ENCODE measurements at regions of chr6 and their contacts with region 1.

Region 1: DNA sequence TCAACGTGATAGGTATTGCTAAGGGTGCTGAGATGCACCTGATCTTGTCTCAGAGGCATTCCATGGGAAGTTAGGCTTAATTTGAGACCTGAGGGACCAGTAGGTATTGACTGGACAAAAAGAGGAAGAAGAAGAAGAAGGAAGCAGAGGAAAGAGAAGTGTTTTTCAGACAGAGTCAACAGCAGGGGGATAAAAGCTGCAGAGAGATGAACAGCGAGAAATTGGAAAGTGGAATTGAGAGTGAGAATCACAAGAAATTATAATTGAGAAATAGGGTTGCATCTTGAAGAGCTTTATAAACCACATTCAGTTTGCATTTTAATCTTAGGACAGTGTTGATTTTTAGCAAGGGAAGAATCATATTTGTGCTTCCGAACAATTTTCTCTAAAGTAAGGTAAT is 254.0 kb downstream of the CD83 start:
- DNase-seq: peak; percentile 55
- ATAC-seq: peak; percentile 31
- H3K4me3 ChIP-seq: peak overlapping the region in 2 of 5 experiments; percentile 10 to 15
- H3K4me3 Mint-ChIP-seq: peak overlapping the region; percentile 62
- H3K27ac ChIP-seq: peak overlapping the region; percentile 40 to 48
- H3K27ac Mint-ChIP-seq: peak overlapping the region; percentile 12
- H3K4me1 ChIP-seq: peaks cover 50 to 66% of the 10 kb centered on the region in 2 donors
- H3K4me1 Mint-ChIP-seq: peaks cover 64% of the 10 kb centered on the region
- H3K27me3 ChIP-seq: no peaks in the 10 kb centered on the region
- H3K27me3 Mint-ChIP-seq: no peaks in the 10 kb centered on the region
- CTCF ChIP-seq: no peak

Region 2: GRCh38 chr6:14676977-14677781 is 305.6 kb after region 1 on chr6:
- CTCF ChIA-PET with region 1: no interaction called
- POLR2A ChIA-PET with region 1: interaction called, 12 read pairs
- intact Hi-C with region 1: no loop called
- DNase-seq: no peak
- ATAC-seq: no peak
- H3K4me3 ChIP-seq: no peak overlapping the region
- H3K4me3 Mint-ChIP-seq: no peak overlapping the region
- H3K27ac ChIP-seq: no peak overlapping the region
- H3K27ac Mint-ChIP-seq: no peak overlapping the region
- H3K4me1 ChIP-seq: peaks cover 4 to 7% of the 10 kb centered on the region in 2 donors
- H3K4me1 Mint-ChIP-seq: peaks cover 24% of the 10 kb centered on the region
- H3K27me3 ChIP-seq: no peaks in the 10 kb centered on the region
- H3K27me3 Mint-ChIP-seq: no peaks in the 10 kb centered on the region
- CTCF ChIP-seq: no peak